ENCODE measurements at regions of chr5 and their contacts with region 1.

Region 1: GRCh38 chr5:173925448-173926071 is 37.4 kb downstream of the CPEB4 start:
- DNase-seq: peak; percentile 58
- ATAC-seq: no peak
- H3K4me3 Mint-ChIP-seq: no peak overlapping the region
- H3K27ac Mint-ChIP-seq: no peak overlapping the region
- H3K4me1 Mint-ChIP-seq: peaks cover 6% of the 10 kb centered on the region
- H3K27me3 Mint-ChIP-seq: no peaks in the 10 kb centered on the region

Region 2: GRCh38 chr5:172740428-172741201 is 1184.9 kb before region 1 on chr5:
- CTCF ChIA-PET with region 1: no interaction called
- POLR2A ChIA-PET with region 1: no interaction called
- DNase-seq: no peak
- ATAC-seq: no peak
- H3K4me3 Mint-ChIP-seq: no peak overlapping the region
- H3K27ac Mint-ChIP-seq: no peak overlapping the region
- H3K4me1 Mint-ChIP-seq: peaks cover 2% of the 10 kb centered on the region
- H3K27me3 Mint-ChIP-seq: no peaks in the 10 kb centered on the region

Region 3: DNA sequence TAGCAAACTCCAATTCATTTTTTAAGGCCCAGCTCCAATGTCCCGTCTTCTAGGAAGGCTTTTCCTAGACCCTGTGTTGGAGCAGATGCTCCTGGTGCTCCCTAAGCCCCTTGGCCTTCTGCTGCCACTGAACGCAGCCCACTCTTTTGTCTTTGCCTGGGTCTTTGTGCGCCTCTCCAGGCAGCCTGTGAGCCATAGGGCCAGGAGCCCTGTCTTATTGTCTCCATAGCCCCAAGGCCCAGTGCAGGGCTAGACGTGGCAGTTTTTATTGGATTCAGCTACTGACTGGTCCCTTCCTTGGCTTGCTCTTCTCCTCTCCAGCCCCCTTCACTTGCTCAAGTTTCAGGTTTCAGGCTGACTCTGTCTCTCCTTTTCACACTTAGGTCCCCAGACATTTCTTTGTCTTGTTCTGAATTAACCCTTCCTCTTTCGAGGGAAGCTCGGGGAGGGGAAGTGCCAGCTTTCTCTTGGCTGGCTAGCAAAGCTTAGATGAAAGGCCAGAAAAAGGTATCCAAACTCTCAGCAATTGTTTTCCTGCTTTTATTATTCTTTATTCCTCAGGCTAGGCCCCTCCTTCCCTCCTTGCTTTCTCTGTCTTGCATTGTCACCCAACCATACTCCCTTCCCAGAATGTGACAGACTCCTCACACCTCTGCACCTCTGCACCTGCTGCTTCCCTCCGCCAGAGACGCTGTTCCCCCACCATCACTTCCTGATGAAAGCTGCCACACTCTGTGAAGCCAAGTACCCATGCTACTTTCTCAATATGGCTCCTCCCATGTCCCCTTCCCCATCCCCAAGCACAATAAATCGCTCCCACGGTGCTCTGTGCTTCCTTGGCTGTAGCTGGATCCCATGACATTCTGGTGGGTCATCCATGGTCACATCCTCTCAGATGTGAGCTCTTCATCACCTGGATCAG is 139.0 kb before region 1 on chr5:
- CTCF ChIA-PET with region 1: interaction called, 13 read pairs
- POLR2A ChIA-PET with region 1: no interaction called
- DNase-seq: no peak
- ATAC-seq: no peak
- H3K4me3 Mint-ChIP-seq: no peak overlapping the region
- H3K27ac Mint-ChIP-seq: no peak overlapping the region
- H3K4me1 Mint-ChIP-seq: peaks cover 15% of the 10 kb centered on the region
- H3K27me3 Mint-ChIP-seq: peaks cover 2% of the 10 kb centered on the region

Region 4: GRCh38 chr5:173887610-173888472 is 37.7 kb before region 1 on chr5 and contains the start of gene CPEB4:
- CTCF ChIA-PET with region 1: interaction called, 29 read pairs
- POLR2A ChIA-PET with region 1: interaction called, 3 read pairs
- DNase-seq: peak; percentile 98
- ATAC-seq: peak; percentile 97
- H3K4me3 Mint-ChIP-seq: peak within 1 kb of the TSS; percentile 96
- H3K27ac Mint-ChIP-seq: peak within 1 kb of the TSS; percentile 97
- H3K4me1 Mint-ChIP-seq: peaks cover 76% of the 10 kb centered on the region
- H3K27me3 Mint-ChIP-seq: no peaks in the 10 kb centered on the region
- total RNA-seq, gene CPEB4: 10.5 to 12.3 TPM

Region 5: GRCh38 chr5:173941758-173942401 is 16.3 kb after region 1 on chr5:
- CTCF ChIA-PET with region 1: interaction called, 11 read pairs
- POLR2A ChIA-PET with region 1: no interaction called
- DNase-seq: no peak
- ATAC-seq: no peak
- H3K4me3 Mint-ChIP-seq: no peak overlapping the region
- H3K27ac Mint-ChIP-seq: no peak overlapping the region
- H3K4me1 Mint-ChIP-seq: no peaks in the 10 kb centered on the region
- H3K27me3 Mint-ChIP-seq: no peaks in the 10 kb centered on the region

Measured in activated CD8-positive, alpha-beta T cell treated with anti-CD3 and anti-CD28 coated beads, Interleukin-2, amount 10 ng/mL, durations not matched to agents 7 days and 5 days (primary cell).